Transverse colon (tissue), 4 donors: ENCODE measurements at regions of chr20 and their contacts with region 1.

Region 1: DNA sequence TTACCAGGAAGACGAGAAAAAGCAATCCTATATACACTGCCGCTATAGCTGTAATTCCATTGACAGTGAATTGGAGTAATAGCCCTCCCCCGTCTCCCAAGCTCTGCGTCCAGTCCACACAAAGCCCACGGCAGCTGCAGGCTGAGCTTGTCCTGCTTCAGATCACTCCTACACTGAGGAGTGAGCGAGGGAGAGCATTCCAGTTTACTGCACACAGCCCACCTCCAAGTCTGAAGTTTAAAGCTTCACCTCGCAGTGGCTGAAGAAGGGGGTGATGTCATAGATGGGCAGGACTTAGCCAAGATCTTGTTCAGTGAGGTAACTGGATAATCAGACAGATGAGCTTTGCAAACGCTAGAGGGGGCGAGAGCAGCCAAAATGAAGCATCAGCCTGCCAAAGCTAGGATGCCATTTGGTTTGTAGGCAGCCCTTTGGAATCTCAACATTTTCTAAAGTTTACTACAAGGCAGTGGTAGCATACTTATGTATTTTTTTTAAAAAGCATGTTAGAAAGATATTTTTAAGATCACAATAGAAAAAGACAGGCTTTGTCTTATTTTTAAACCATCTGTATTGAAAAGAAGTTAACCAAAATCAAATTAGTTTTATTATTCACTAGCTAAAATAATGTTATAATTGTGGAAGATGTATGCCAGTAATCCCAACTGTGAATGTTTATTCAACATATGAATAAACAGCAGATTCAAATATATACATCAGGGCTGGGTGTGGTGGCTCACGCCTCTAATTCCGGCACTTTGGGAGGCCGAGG is at the start of gene FLRT3:
- DNase-seq: peak; percentile 79
- H3K4me3 ChIP-seq: peak within 1 kb of the TSS; percentile 11 to 59 (median 38)
- H3K27ac ChIP-seq: peak within 1 kb of the TSS; percentile 65 to 82 (median 72)
- H3K4me1 ChIP-seq: peaks cover 0 to 15% (median 0%) of the 10 kb centered on the region in 4 donors
- H3K27me3 ChIP-seq: no peaks in the 10 kb centered on the region
- CTCF ChIP-seq: peak; percentile 60 to 85 (median 67)
- EP300 ChIP-seq: no peak
- POLR2A ChIP-seq: peak; percentile 73
- total RNA-seq, gene FLRT3: 0.37 to 6.2 (median 4.0) TPM

Region 2: GRCh38 chr20:14319704-14320103 is 17.9 kb before region 1 on chr20:
- in situ Hi-C with region 1: no loop called
- intact Hi-C with region 1: loop called (anchors 1 kb)
- DNase-seq: no peak
- H3K4me3 ChIP-seq: no peak overlapping the region
- H3K27ac ChIP-seq: no peak overlapping the region
- H3K4me1 ChIP-seq: no peaks in the 10 kb centered on the region
- H3K27me3 ChIP-seq: no peaks in the 10 kb centered on the region
- CTCF ChIP-seq: no peak
- EP300 ChIP-seq: no peak
- POLR2A ChIP-seq: no peak

Region 3: DNA sequence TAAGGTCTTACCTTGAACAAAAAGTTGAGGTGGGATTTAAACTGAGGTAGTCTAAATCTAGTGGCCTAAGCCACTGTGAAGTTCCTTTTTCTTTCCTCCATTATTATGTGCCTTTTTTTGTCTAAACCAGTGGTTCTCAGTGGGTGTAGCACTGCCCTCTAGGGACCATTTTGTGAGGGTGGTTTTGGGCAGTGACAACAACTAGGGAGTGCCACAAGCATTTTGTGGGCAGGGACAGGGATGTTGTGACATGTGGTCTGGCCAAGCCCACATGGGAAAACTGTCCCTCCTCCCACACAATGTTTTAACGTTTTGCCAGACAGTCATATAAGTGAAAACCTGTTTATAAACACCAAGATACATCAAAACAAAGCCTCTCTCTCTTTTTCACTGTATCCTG is 899.2 kb after region 1 on chr20:
- in situ Hi-C with region 1: loop called in 1 of 4 experiments (anchors 25 kb)
- intact Hi-C with region 1: no loop called
- DNase-seq: peak; percentile 17
- H3K4me3 ChIP-seq: no peak overlapping the region
- H3K27ac ChIP-seq: no peak overlapping the region
- H3K4me1 ChIP-seq: no peaks in the 10 kb centered on the region
- H3K27me3 ChIP-seq: no peaks in the 10 kb centered on the region
- CTCF ChIP-seq: peak in 4 of 5 experiments; percentile 21 to 40 (median 30)
- EP300 ChIP-seq: no peak
- POLR2A ChIP-seq: no peak